ENCODE measurements at regions of chr18 and their contacts with region 1.

Region 1: GRCh38 chr18:47418746-47419145 is 167.3 kb upstream of the SKOR2 start:
- DNase-seq: no peak
- H3K4me3 ChIP-seq: no peak overlapping the region
- H3K27ac ChIP-seq: no peak overlapping the region
- H3K4me1 ChIP-seq: no peaks in the 10 kb centered on the region
- H3K27me3 ChIP-seq: peaks cover 0 to 21% of the 10 kb centered on the region in 2 donors
- CTCF ChIP-seq: no peak
- POLR2A ChIP-seq: no peak

Region 2: DNA sequence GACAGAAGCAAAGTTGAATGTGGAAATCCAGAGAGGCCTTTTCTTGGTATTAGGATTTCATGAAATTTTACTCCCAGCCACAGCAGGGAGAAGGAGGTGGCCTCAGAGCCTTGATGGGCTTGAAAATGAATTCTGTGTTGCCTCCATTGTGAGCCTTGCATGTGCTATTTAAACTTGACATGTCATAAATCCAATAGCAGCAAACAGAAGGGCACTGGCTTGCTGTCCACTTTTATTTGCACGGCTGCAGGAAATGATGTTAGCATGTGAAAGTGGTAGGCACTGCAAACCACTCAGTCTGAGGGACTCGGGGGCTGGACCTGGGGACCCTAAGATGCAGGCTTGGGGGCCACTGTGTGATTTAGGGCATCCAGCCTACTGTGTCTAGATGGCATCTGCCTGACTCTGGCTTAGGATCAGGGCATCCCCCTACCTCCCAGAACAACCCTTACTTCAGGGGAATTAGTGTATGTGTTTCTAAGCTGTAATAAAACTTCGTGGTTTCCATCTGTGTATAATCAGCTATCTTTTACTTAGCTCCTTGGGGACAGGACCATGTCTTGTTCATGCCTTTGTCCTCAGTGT is 28.2 kb before region 1 on chr18:
- intact Hi-C with region 1: loop called (anchors 1 kb)
- DNase-seq: no peak
- H3K4me3 ChIP-seq: no peak overlapping the region
- H3K27ac ChIP-seq: no peak overlapping the region
- H3K4me1 ChIP-seq: no peaks in the 10 kb centered on the region
- H3K27me3 ChIP-seq: no peaks in the 10 kb centered on the region
- CTCF ChIP-seq: no peak
- POLR2A ChIP-seq: no peak

Region 3: DNA sequence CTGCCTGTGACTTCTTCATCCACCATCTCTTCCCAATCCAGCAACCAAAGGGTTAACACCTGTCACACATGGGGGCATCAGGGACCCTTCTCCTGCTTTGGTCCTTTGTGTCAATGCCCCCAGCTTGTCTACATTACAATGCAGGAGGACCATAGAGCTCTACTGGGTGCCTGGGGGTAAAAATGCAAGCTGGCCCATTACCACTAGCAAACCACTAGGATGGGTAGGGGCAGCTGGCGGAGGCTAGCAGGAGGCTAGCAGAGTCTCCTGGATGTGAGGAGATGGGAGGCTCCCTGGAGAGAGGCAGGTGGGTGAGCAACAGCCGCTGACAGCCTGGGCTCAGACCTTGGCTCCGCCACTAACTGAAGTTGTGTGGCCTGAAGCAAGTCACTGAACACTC is 13.9 kb before region 1 on chr18:
- intact Hi-C with region 1: no loop called
- DNase-seq: no peak
- H3K4me3 ChIP-seq: no peak overlapping the region
- H3K27ac ChIP-seq: no peak overlapping the region
- H3K4me1 ChIP-seq: no peaks in the 10 kb centered on the region
- H3K27me3 ChIP-seq: no peaks in the 10 kb centered on the region
- CTCF ChIP-seq: no peak
- POLR2A ChIP-seq: no peak